Posterior vena cava (tissue), 2 donors: ENCODE measurements at regions of chr6 and their contacts with region 1.

Region 1: DNA sequence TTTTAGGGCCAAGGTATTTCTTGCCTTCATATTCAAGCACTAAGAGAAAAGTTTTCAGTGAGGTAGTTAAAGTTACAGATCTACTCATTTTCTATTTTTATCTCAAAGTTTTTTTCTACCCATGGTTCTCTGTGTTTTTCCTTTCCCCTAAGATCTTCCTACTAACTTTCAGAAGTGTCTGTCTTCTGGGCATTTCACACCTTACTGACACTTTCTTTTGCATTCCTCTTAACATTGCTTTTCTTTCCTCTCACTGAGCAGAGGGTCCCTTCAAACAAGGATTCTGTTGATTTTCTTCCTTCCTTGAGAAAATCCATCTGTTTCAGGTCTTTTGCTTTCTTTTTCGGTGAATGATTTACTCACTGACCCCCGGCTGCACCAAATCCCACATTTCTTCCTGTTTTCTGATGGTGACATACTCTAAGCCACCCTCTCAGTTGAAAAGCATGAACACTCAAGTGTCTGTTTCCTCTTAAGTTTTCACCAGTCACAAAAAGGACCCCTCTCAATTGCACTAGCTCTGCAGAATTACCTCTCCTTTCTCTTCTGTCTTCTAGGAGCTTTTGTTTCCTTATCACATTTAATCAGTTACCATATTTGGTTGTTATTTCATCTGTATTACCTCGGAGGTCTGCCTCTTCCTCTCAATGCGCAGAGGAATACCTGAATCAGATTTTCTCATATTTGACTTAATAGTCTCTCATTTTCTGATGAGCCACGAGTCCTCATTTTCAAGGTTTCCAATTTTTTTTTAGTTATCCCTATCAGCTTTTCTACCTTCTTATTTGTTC is 73.5 kb upstream of the RNF217 start:
- DNase-seq: no peak

Region 2: DNA sequence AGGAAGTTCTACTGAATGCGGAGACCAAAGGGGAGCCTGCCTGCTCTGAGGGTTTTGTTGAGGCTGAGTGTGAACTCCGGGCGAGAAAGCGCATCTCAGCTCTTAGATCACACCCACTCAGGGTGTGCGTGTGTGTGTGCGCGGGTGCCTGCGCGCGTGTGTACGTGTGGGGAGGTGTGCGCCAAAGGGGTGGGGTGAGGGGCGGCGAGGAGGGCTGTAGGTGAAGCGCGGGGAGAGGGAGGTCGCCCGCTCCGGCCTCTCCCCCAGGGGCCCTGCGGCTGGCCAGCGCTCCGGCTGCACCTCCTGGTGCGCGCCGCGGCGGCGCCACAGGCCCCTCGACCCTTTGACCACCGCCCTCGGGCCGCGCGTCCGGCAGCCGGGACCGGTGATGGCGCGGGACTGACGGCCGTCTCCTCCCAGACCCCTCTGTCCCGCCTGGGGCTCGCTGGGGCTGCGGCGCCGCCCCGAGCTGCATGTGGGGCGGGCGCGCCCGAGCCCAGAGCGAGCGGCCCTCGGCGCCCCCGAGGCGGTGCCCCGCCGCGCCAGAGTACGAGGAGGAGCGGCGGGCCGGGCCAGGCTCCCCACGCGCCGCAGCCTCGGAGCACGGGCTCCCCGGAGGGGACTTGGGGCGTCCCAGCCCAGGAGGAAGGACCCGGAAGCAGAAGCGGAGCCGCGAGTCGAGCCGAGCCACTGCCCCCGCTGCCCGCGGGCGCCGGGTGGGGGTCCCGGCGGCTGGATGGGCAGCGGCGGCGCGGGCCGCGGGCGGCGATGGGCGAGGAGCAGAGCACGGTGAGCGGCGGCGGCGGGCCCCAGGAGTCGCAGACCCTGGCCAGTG is 73.2 kb after region 1 on chr6 and contains the start of gene RNF217:
- intact Hi-C with region 1: no loop called
- DNase-seq: peak; percentile 91
- total RNA-seq, gene RNF217: 23.7 to 29.2 TPM

Region 3: DNA sequence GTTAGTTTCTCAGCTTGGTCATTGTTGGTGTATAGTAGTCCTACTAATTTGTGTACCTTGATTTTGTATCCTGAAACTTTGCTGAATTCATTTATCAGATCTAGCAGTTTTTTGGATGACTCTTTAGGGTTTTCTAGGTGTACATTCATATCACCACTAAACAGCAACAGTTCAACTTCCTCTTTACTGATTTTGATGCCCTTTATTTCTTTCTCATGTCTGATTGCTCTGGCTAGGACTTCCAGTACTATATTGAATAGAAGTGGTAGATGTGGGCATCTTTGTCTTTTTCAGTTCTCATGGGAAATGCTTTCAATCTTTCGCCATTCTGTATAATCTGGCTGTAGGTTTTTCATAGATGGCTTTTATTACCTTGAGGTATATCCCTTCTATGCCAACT is 799.4 kb after region 1 on chr6:
- intact Hi-C with region 1: loop called in 1 of 2 experiments (anchors 5 kb)
- DNase-seq: no peak